ENCODE measurements at regions of chr2 and their contacts with region 1.

Region 1: DNA sequence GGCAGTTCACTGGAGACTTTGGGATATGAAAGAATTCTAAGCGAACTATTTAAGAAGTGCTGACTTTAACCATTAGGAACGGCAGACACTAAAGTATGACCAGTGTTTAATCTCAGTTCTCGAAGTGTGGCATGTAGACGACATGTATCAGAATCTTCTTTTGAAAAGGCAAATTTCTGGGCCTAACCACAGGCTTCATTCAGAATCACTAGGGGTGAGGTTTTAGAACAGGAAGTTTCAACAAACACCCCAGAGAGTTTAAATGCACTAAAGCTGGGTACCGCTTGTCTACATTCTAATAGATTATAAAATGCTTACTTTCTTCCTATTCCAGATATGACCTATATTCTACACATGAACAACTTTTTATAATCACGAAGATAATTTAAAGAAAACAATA is 180.3 kb downstream of the ANKRD44 start:
- DNase-seq: peak; percentile 56
- H3K4me3 Mint-ChIP-seq: peak overlapping the region; percentile 6
- H3K27ac Mint-ChIP-seq: peak overlapping the region; percentile 67
- H3K4me1 Mint-ChIP-seq: peaks cover 67% of the 10 kb centered on the region
- H3K27me3 Mint-ChIP-seq: no peaks in the 10 kb centered on the region

Region 2: DNA sequence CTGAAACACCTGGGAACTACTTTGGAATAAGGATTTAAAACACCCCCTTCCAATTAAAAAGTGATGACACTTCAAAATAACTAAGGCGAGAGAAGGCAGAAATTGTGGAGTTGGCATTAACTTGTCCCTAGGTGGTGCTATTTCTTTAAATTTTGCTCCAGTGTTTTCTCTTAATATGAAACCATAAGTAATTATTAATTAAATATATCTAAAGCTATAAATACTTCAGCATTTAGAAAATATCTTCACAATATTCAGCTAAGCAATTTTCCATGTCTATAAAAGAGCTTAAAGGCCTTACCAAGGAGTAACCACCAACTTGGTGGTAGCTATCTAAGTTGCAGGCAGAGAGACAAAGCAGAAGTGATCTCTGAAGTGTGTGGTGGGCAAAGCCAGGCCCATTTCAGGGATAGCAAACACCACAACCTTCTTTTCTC is 17.0 kb before region 1 on chr2:
- CTCF ChIA-PET with region 1: interaction called, 13 read pairs
- POLR2A ChIA-PET with region 1: no interaction called
- DNase-seq: no peak
- H3K4me3 Mint-ChIP-seq: no peak overlapping the region
- H3K27ac Mint-ChIP-seq: no peak overlapping the region
- H3K4me1 Mint-ChIP-seq: peaks cover 20% of the 10 kb centered on the region
- H3K27me3 Mint-ChIP-seq: no peaks in the 10 kb centered on the region

Region 3: DNA sequence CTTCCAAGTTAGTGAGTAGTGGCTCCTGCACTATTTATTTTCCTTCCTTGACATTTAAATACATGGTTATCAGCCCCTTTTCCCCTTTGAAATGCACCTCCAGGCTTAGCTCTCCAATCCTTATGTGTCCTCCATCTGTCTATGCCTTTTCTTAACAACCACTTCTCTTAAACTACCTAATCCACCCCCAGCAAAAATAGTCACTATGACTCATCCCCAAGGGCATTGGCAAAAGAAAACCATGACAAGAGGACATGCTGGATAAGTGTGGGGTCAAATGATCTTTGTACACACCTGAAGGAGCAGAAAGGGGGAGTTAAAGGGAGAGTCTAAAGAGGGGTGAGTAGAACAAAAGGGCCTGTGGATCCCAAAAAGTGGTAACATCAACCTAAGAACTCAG is 53.0 kb after region 1 on chr2:
- CTCF ChIA-PET with region 1: interaction called, 3 read pairs
- POLR2A ChIA-PET with region 1: interaction called, 14 read pairs
- DNase-seq: no peak
- H3K4me3 Mint-ChIP-seq: no peak overlapping the region
- H3K27ac Mint-ChIP-seq: peak overlapping the region; percentile 14
- H3K4me1 Mint-ChIP-seq: peaks cover 49% of the 10 kb centered on the region
- H3K27me3 Mint-ChIP-seq: no peaks in the 10 kb centered on the region